Ascending aorta (tissue), 2 donors: ENCODE measurements at regions of chr10 and their contacts with region 1.

Region 1: GRCh38 chr10:102673819-102674511 is 29.7 kb downstream of the TRIM8 start:
- DNase-seq: peak; percentile 31 to 86
- H3K4me3 ChIP-seq: peak overlapping the region; percentile 5 to 47
- H3K27ac ChIP-seq: peak overlapping the region; percentile 77 to 78
- H3K4me1 ChIP-seq: peaks cover 15 to 33% of the 10 kb centered on the region in 2 donors
- H3K27me3 ChIP-seq: no peaks in the 10 kb centered on the region
- CTCF ChIP-seq: no peak

Region 2: GRCh38 chr10:102660888-102661657 is 12.9 kb before region 1 on chr10:
- intact Hi-C with region 1: no loop called
- DNase-seq: no peak
- H3K4me3 ChIP-seq: peak overlapping the region in 1 of 2 donors; percentile 19
- H3K27ac ChIP-seq: peak overlapping the region in 1 of 2 donors; percentile 34
- H3K4me1 ChIP-seq: peaks cover 6 to 9% of the 10 kb centered on the region in 2 donors
- H3K27me3 ChIP-seq: no peaks in the 10 kb centered on the region
- CTCF ChIP-seq: no peak

Region 3: DNA sequence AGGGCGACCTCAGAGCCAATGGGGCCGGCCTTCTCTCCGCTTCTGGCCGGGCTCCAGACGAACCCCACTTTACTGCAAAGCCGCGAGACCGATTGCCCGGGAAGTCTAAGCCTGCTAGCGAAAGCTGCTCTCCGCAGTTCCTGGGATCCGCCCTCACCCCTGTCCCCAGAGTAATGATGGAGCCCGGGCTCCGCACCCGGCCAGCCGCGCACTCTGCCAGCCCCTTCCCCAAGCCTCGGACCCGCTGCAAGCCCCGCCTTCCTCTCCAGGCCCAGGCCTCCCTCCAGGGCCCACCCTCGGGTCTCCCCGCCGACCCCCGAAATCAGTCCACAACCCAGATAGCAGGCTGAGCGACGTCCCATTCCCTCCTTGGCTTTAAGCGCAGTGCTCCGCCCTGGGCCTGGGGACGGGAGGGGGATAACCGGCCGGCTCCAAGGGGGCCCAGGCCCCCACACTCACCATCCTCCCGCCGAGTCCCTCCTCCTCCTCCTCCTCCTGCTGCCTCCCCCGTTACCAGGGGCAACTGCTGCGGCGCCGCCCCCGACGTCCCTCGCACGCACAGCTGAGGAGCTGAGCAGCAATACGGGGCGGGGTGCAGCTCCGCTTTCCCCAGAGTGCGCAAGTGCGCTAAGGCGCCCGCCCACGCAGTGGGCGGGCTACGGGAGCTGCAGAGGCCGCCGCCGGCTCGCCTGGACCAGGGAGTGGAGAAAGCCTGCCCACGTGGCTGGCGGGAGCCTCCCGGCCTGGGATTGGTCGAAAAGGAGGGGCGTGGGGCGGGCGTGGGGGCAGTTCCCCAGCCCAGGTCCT is 40.1 kb after region 1 on chr10 and contains the start of gene ARL3:
- intact Hi-C with region 1: loop called (anchors 2 kb)
- DNase-seq: peak; percentile 94 to 98
- H3K4me3 ChIP-seq: peak within 1 kb of the TSS; percentile 84 to 91
- H3K27ac ChIP-seq: peak within 1 kb of the TSS; percentile 79 to 83
- H3K4me1 ChIP-seq: peaks cover 0 to 13% of the 10 kb centered on the region in 2 donors
- H3K27me3 ChIP-seq: no peaks in the 10 kb centered on the region
- CTCF ChIP-seq: peak; percentile 21 to 42 (median 39)
- total RNA-seq, gene ARL3: 2.0 TPM